ENCODE measurements at regions of chr1 and their contacts with region 1.

Region 1: DNA sequence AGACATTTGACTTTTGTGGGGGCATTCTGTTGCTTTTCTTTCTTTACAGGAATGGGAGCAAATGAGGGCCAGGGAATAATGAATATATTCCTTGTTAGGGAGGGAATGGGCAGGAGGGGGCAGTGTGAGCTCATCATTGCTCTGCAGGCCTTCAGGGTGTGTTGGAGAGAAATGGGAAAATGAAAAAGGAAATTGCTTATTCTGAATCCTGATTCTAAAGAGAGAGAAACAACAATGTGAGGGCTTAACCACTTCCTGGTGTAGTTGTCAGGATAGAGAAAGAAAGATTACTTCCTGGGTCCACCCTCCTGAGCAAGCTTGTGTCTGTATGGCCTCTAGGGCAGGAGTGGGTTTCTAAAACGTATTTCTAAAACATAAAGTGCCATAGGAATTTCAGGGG is 28.3 kb downstream of the VANGL2 start:
- DNase-seq: peak; percentile 66
- H3K4me3 Mint-ChIP-seq: peak overlapping the region; percentile 23
- H3K27ac Mint-ChIP-seq: peak overlapping the region; percentile 88
- H3K4me1 Mint-ChIP-seq: peaks cover 65% of the 10 kb centered on the region
- H3K27me3 Mint-ChIP-seq: no peaks in the 10 kb centered on the region

Region 2: DNA sequence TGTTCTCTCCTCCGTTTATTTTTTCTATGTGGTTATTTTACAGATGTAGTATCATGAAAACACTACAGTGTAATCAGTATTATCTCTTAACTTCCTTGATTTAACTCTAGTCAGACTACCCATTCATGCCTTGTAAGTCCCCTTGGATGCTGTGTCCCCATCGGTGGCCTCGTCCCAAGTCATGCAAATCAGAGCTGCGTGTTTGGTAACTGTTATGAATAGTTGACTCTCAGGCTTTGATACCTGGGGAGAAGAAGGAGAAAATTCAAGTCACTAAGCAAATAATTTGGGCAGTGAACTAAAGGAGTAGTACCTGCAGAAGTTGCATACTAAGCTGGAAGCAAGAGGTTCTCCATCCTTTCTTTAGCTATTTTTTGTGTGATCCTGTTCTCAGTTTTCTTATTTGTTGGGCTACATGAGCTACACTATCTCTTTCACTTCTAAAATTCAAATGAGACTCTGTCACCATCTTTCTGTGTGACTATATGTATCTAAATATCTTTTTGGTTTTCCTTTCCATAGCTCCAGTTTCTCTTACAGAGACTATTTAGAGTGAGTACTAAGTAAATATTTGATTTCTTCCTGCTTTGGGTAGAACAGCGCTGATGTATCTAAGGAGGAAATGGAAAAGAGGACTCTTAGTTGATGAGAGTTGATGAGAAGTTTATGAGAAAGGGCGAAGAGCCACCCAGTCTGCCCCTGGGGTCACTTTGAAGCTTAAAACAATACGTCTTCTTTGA is 22.6 kb after region 1 on chr1:
- CTCF ChIA-PET with region 1: interaction called, 10 read pairs
- intact Hi-C with region 1: loop called (anchors 1 kb)
- DNase-seq: no peak
- H3K4me3 Mint-ChIP-seq: peak overlapping the region; percentile 56
- H3K27ac Mint-ChIP-seq: peak overlapping the region; percentile 93
- H3K4me1 Mint-ChIP-seq: peaks cover 76% of the 10 kb centered on the region
- H3K27me3 Mint-ChIP-seq: no peaks in the 10 kb centered on the region

Region 3: GRCh38 chr1:160466961-160467360 is 38.3 kb after region 1 on chr1:
- CTCF ChIA-PET with region 1: interaction called, 11 read pairs
- intact Hi-C with region 1: loop called (anchors 1 kb)
- DNase-seq: no peak
- H3K4me3 Mint-ChIP-seq: no peak overlapping the region
- H3K27ac Mint-ChIP-seq: peak overlapping the region; percentile 86
- H3K4me1 Mint-ChIP-seq: peaks cover 64% of the 10 kb centered on the region
- H3K27me3 Mint-ChIP-seq: no peaks in the 10 kb centered on the region

Region 4: GRCh38 chr1:160519642-160520435 is 91.2 kb after region 1 on chr1:
- CTCF ChIA-PET with region 1: interaction called, 9 read pairs
- intact Hi-C with region 1: loop called (anchors 1 kb)
- DNase-seq: peak; percentile 60
- H3K4me3 Mint-ChIP-seq: peak overlapping the region; percentile 85
- H3K27ac Mint-ChIP-seq: peak overlapping the region; percentile 97
- H3K4me1 Mint-ChIP-seq: peaks cover 71% of the 10 kb centered on the region
- H3K27me3 Mint-ChIP-seq: no peaks in the 10 kb centered on the region

Region 5: DNA sequence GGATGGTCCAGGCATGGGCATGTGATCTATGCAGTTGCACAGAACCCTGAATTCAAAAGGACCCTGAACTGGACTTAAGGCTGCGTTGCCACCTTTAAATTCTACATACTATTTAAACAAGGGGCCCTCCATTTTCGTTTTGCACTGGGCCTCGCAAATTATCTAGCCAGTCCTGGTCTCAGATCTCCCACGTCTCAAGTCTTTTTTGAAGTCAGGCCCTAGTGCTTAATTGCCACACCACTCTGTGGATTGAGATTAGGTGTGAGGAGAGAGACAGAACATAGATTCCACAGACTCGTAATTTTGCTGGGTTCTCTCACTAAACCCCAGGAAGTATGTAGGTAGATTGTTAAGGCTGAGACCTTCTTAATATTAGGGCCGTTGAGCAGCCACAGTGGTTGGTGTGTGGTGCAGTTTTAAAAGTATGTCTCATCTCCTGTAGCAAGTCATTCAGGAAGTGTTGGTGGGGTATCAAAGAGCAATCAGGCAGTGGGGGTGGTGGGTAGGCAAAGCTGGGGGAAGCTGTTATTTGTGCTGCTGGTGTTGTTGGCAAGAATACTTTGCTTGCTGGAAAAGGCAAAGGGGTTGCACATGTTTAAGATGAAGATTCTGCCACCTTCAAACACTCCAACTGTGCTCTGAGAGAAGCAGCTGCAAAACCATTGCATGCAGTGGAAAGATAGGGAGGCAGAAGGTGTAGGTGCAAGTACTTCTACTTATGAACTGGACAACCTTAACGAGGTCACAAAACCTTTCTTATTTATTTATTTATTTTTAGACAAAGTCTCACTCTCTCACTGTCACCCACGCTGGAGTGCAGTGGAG is 139.4 kb after region 1 on chr1:
- CTCF ChIA-PET with region 1: interaction called, 3 read pairs
- intact Hi-C with region 1: loop called (anchors 2 kb)
- DNase-seq: peak; percentile 77
- H3K4me3 Mint-ChIP-seq: peak overlapping the region; percentile 62
- H3K27ac Mint-ChIP-seq: peak overlapping the region; percentile 95
- H3K4me1 Mint-ChIP-seq: peaks cover 84% of the 10 kb centered on the region
- H3K27me3 Mint-ChIP-seq: no peaks in the 10 kb centered on the region

Region 6: DNA sequence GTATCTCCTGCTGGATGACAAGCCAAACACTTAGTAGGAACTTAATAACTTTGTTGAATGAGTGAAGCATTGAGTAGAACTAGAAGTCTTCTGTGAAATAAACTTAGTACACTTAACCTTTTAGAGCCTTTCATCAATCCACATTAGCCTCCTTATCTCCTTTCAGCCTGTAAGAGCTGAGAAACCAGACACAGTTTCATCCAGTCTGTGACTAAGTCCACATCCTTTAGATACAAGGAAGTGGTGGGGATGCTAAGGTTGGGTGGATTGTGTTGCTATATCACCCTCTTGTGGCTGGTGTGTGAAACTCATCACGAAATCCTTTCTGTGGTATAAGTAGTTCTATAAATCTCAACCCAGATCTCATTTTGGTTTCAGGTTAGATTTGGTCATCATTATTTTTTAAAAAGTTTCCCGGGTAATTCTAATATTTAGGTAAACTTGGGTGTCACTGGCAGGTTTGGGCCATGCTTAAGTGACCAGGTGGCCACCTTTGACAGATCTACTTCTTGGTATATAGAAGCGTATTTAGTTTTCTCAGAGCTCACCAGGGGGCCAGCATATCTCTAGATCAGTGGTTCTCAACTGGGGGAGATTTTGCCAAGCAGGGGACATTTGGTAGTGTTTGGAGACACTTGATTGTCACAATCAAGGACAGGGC is 178.5 kb after region 1 on chr1:
- CTCF ChIA-PET with region 1: interaction called, 45 read pairs
- intact Hi-C with region 1: loop called (anchors 1 kb)
- DNase-seq: peak; percentile 81
- H3K4me3 Mint-ChIP-seq: no peak overlapping the region
- H3K27ac Mint-ChIP-seq: peak overlapping the region; percentile 82
- H3K4me1 Mint-ChIP-seq: peaks cover 48% of the 10 kb centered on the region
- H3K27me3 Mint-ChIP-seq: no peaks in the 10 kb centered on the region

Region 7: DNA sequence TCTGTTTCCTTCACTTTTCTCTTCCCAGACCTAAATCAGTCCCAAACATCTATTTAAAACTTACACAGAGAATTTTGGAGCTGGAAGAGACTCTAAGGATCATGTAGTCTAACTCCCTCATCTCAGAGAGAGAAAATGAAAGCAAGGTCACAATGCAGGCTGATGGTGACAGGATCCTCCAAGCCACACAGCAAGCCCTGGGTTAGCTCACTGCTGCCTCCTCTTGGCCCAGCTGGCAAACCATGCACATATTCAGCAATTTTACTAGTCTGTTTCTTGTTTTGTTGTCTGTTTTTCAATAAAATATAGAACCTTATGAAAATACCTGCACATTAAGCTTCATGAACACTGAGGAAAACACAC is 339.6 kb after region 1 on chr1:
- CTCF ChIA-PET with region 1: interaction called, 3 read pairs
- intact Hi-C with region 1: loop called (anchors 2 kb)
- DNase-seq: peak; percentile 96
- H3K4me3 Mint-ChIP-seq: peak overlapping the region; percentile 79
- H3K27ac Mint-ChIP-seq: peak overlapping the region; percentile 99
- H3K4me1 Mint-ChIP-seq: peaks cover 68% of the 10 kb centered on the region
- H3K27me3 Mint-ChIP-seq: no peaks in the 10 kb centered on the region